ENCODE measurements at regions of chr21 and their contacts with region 1.

Region 1: DNA sequence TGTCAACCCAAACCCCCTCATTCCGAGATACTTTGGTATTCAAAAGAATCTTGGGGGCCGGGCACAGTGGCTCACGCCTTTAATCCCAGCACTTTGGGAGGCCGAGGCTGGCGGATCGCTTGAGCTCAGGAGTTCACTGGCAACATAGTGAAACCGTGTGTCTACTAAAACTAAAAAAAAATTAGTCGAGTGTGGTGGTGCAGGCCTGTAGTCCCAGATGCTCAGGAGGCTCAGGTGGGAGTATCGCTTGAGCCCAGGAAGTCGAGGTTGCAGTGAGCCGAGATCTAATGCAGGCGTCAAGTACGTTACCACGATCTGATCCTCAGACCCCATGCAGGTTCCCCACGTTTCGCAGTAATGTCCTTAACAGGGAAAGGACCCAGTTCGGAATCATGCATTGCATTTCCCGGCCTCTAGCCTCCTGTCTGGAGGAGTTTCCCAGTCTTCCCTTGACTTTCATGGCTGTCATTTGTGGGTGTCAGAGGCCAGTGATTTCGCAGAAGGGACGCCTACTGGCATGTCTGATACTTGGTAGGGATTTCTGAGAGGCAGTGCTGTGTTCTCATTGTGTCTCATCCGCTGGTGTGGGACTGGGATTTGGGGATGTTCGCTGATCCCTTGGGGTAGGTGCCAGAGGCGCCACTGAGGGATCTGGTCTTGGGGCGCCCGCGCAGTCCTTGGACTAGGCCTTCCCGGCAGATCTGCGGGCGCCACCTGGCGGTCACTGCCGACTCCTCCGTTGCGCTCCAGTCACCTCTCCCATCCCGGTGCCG is 39.3 kb upstream of the HMGN1 start:
- H3K4me3 ChIP-seq: peak overlapping the region; percentile 30
- H3K27ac ChIP-seq: peak overlapping the region; percentile 65
- H3K4me1 ChIP-seq: peaks cover 14% of the 10 kb centered on the region
- CTCF ChIP-seq: peak; percentile 98

Region 2: DNA sequence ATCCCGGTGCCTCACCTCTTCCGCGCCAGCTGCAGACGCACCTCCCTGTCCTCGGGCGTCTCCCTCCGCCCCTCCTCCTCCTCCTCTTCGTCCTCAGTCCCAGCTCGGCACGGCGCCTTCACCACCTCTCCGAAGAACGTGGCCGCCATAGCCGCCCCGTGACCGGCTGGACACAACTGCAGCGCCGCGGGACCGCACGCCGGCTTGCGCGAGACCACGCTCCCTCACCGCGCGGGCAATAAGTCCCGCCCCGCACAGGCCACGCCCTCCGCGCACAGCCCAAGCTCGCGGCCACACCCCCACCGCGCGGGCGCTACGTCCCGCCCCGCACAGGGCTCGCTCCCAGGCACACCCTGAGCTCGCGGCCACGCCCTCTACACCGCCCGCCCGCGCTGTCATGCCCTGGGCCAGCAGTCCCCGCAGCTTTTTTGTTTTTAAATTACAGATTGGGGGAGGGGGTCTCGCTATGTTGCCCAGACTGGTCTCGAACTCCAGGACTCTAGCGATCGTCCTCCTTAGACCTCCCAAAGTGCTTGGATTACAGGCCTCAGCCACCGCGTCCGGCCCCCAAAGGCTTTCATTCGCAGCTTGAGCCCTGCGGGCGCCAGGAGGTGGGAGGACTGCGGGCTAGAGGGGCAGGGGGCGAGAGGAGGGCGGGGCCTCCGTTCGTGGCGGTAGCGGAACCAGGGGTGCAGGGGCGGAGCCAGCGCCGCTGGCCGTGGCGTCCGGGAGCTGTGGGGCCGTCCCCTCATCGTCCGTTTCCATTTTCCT is 204.8 kb before region 1 on chr21 and contains the start of gene PSMG1:
- CTCF ChIA-PET with region 1: interaction called, 4 read pairs
- POLR2A ChIA-PET with region 1: interaction called, 26 read pairs
- H3K4me3 ChIP-seq: peak within 1 kb of the TSS; percentile 89
- H3K27ac ChIP-seq: peak within 1 kb of the TSS; percentile 86
- H3K4me1 ChIP-seq: 0 out of 2 replicates have a peak, but pooled peaks cover 3% of the 10 kb centered on the region
- CTCF ChIP-seq: peak; percentile 66

Region 3: GRCh38 chr21:39340687-39341086 is 47.5 kb before region 1 on chr21:
- CTCF ChIA-PET with region 1: no interaction called
- POLR2A ChIA-PET with region 1: interaction called, 12 read pairs
- H3K4me3 ChIP-seq: no peak overlapping the region
- H3K27ac ChIP-seq: no peak overlapping the region
- H3K4me1 ChIP-seq: no peaks in the 10 kb centered on the region
- CTCF ChIP-seq: no peak

Region 4: GRCh38 chr21:39349211-39350093 is 38.8 kb before region 1 on chr21:
- CTCF ChIA-PET with region 1: interaction called, 4 read pairs
- POLR2A ChIA-PET with region 1: interaction called, 33 read pairs
- H3K4me3 ChIP-seq: peak overlapping the region; percentile 61
- H3K27ac ChIP-seq: peak overlapping the region; percentile 86
- H3K4me1 ChIP-seq: 0 out of 2 replicates have a peak, but pooled peaks cover 3% of the 10 kb centered on the region
- CTCF ChIP-seq: no peak

Region 5: GRCh38 chr21:39373644-39374043 is 14.6 kb before region 1 on chr21:
- CTCF ChIA-PET with region 1: interaction called, 15 read pairs
- POLR2A ChIA-PET with region 1: interaction called, 6 read pairs
- H3K4me3 ChIP-seq: no peak overlapping the region
- H3K27ac ChIP-seq: no peak overlapping the region
- H3K4me1 ChIP-seq: no peaks in the 10 kb centered on the region
- CTCF ChIP-seq: peak; percentile 27; the same call in 1 of the 2 replicates

Region 6: GRCh38 chr21:39445321-39446269 is 57.4 kb after region 1 on chr21 and contains the start of gene LCA5L:
- CTCF ChIA-PET with region 1: interaction called, 27 read pairs
- POLR2A ChIA-PET with region 1: interaction called, 11 read pairs
- H3K4me3 ChIP-seq: peak within 1 kb of the TSS; percentile 84
- H3K27ac ChIP-seq: peak within 1 kb of the TSS; percentile 76
- H3K4me1 ChIP-seq: peaks cover 6% of the 10 kb centered on the region
- CTCF ChIP-seq: peak; percentile 89

Region 7: GRCh38 chr21:40067751-40068150 is 679.5 kb after region 1 on chr21:
- CTCF ChIA-PET with region 1: no interaction called
- POLR2A ChIA-PET with region 1: no interaction called
- H3K4me3 ChIP-seq: no peak overlapping the region
- H3K27ac ChIP-seq: no peak overlapping the region
- H3K4me1 ChIP-seq: no peaks in the 10 kb centered on the region
- CTCF ChIP-seq: no peak